ENCODE measurements at regions of chr17 and their contacts with region 1.

Region 1: GRCh38 chr17:75412455-75413317 is 7.2 kb upstream of the GRB2 start:
- DNase-seq: peak; percentile 49 to 88 (median 73)
- ATAC-seq: peak; percentile 90
- H3K4me3 ChIP-seq: peak overlapping the region in 1 of 2 experiments; percentile 22
- H3K4me3 Mint-ChIP-seq: peak overlapping the region; percentile 72
- H3K27ac ChIP-seq: no peak overlapping the region
- H3K27ac Mint-ChIP-seq: peak overlapping the region; percentile 62
- H3K4me1 ChIP-seq: peaks cover 8% of the 10 kb centered on the region
- H3K4me1 Mint-ChIP-seq: peaks cover 16% of the 10 kb centered on the region
- H3K27me3 ChIP-seq: no peaks in the 10 kb centered on the region
- H3K27me3 Mint-ChIP-seq: no peaks in the 10 kb centered on the region
- CTCF ChIP-seq: peak; percentile 70

Region 2: GRCh38 chr17:75182569-75183450 is 229.9 kb before region 1 on chr17 and contains the start of gene SUMO2:
- CTCF ChIA-PET with region 1: no interaction called
- POLR2A ChIA-PET with region 1: no interaction called
- intact Hi-C with region 1: no loop called
- DNase-seq: peak; percentile 89 to 98 (median 95)
- ATAC-seq: peak; percentile 77
- H3K4me3 ChIP-seq: peak within 1 kb of the TSS; percentile 68 to 82
- H3K4me3 Mint-ChIP-seq: peak within 1 kb of the TSS; percentile 92
- H3K27ac ChIP-seq: peak within 1 kb of the TSS; percentile 95
- H3K27ac Mint-ChIP-seq: peak within 1 kb of the TSS; percentile 98
- H3K4me1 ChIP-seq: peaks cover 28% of the 10 kb centered on the region
- H3K4me1 Mint-ChIP-seq: peaks cover 46% of the 10 kb centered on the region
- H3K27me3 ChIP-seq: no peaks in the 10 kb centered on the region
- H3K27me3 Mint-ChIP-seq: no peaks in the 10 kb centered on the region
- CTCF ChIP-seq: no peak
- total RNA-seq, gene SUMO2: 192 to 203 TPM

Region 3: DNA sequence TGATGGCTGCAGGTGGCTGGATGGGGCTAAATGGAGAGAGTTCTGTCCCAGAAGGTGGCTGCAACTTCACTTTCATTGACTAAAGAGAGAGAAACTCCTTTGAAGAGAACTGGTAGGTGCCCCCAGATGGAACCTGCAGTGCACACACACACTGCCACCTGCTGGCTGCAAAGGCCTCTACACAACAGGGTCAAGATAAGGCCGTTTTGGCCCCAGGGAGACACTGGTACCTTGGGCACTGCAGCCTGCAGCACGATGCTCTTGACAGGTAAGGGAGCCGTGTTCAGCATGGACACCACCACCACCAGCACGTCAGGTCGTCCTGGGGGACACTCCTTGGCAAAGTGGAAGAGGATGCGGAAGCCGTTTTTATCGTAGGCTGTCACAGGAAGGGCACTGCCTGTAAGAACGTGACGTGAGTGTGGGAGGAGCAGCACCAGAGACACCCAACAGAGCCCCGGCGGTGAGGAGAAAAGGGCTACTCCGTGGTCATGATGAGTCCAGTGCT is 173.9 kb before region 1 on chr17:
- CTCF ChIA-PET with region 1: interaction called, 10 read pairs
- POLR2A ChIA-PET with region 1: no interaction called
- intact Hi-C with region 1: no loop called
- DNase-seq: peak; percentile 24 to 78 (median 63)
- ATAC-seq: peak; percentile 47
- H3K4me3 ChIP-seq: no peak overlapping the region
- H3K4me3 Mint-ChIP-seq: no peak overlapping the region
- H3K27ac ChIP-seq: no peak overlapping the region
- H3K27ac Mint-ChIP-seq: peak overlapping the region; percentile 58
- H3K4me1 ChIP-seq: peaks cover 6% of the 10 kb centered on the region
- H3K4me1 Mint-ChIP-seq: peaks cover 24% of the 10 kb centered on the region
- H3K27me3 ChIP-seq: no peaks in the 10 kb centered on the region
- H3K27me3 Mint-ChIP-seq: no peaks in the 10 kb centered on the region
- CTCF ChIP-seq: peak; percentile 86

Region 4: GRCh38 chr17:75319904-75320691 is 92.6 kb before region 1 on chr17:
- CTCF ChIA-PET with region 1: interaction called, 208 read pairs
- POLR2A ChIA-PET with region 1: interaction called, 4 read pairs
- intact Hi-C with region 1: loop called (anchors 1 kb)
- DNase-seq: no peak
- ATAC-seq: no peak
- H3K4me3 ChIP-seq: no peak overlapping the region
- H3K4me3 Mint-ChIP-seq: no peak overlapping the region
- H3K27ac ChIP-seq: no peak overlapping the region
- H3K27ac Mint-ChIP-seq: no peak overlapping the region
- H3K4me1 ChIP-seq: peaks cover 5% of the 10 kb centered on the region
- H3K4me1 Mint-ChIP-seq: peaks cover 6% of the 10 kb centered on the region
- H3K27me3 ChIP-seq: no peaks in the 10 kb centered on the region
- H3K27me3 Mint-ChIP-seq: no peaks in the 10 kb centered on the region
- CTCF ChIP-seq: no peak

Region 5: GRCh38 chr17:75345514-75346167 is 67.0 kb before region 1 on chr17:
- CTCF ChIA-PET with region 1: interaction called, 17 read pairs
- POLR2A ChIA-PET with region 1: no interaction called
- intact Hi-C with region 1: no loop called
- DNase-seq: peak in 8 of 9 experiments; percentile 11 to 81 (median 61)
- ATAC-seq: peak; percentile 81
- H3K4me3 ChIP-seq: peak overlapping the region; percentile 10 to 33
- H3K4me3 Mint-ChIP-seq: peak overlapping the region; percentile 72
- H3K27ac ChIP-seq: peak overlapping the region; percentile 8 to 64
- H3K27ac Mint-ChIP-seq: peak overlapping the region; percentile 93
- H3K4me1 ChIP-seq: peaks cover 82% of the 10 kb centered on the region
- H3K4me1 Mint-ChIP-seq: peaks cover 90% of the 10 kb centered on the region
- H3K27me3 ChIP-seq: no peaks in the 10 kb centered on the region
- H3K27me3 Mint-ChIP-seq: no peaks in the 10 kb centered on the region
- CTCF ChIP-seq: no peak

Region 6: GRCh38 chr17:75400326-75400939 is 12.3 kb before region 1 on chr17:
- CTCF ChIA-PET with region 1: interaction called, 17 read pairs
- POLR2A ChIA-PET with region 1: interaction called, 5 read pairs
- intact Hi-C with region 1: no loop called
- DNase-seq: no peak
- ATAC-seq: no peak
- H3K4me3 ChIP-seq: no peak overlapping the region
- H3K4me3 Mint-ChIP-seq: no peak overlapping the region
- H3K27ac ChIP-seq: no peak overlapping the region
- H3K27ac Mint-ChIP-seq: no peak overlapping the region
- H3K4me1 ChIP-seq: peaks cover 48% of the 10 kb centered on the region
- H3K4me1 Mint-ChIP-seq: peaks cover 61% of the 10 kb centered on the region
- H3K27me3 ChIP-seq: no peaks in the 10 kb centered on the region
- H3K27me3 Mint-ChIP-seq: no peaks in the 10 kb centered on the region
- CTCF ChIP-seq: no peak

Region 7: DNA sequence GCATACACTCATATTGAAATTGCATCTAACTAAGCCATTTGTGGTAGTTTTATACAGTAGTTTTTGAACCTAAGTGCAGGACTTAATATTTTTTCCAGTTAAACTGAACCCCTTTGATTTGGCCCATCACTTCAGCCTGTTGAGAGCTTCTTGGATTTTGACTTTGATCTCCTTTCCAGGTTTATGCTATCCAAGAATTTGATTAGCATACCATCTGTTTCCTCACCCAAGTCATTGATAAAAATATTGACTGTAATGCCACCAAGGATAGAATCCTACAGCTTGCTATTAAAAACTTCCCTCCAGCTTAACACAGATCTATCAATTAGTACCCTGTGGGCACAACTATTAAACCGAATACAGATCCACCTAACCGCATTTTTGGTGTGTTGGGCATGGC is 50.9 kb after region 1 on chr17:
- CTCF ChIA-PET with region 1: no interaction called
- POLR2A ChIA-PET with region 1: no interaction called
- intact Hi-C with region 1: no loop called
- DNase-seq: no peak
- ATAC-seq: no peak
- H3K4me3 ChIP-seq: no peak overlapping the region
- H3K4me3 Mint-ChIP-seq: no peak overlapping the region
- H3K27ac ChIP-seq: no peak overlapping the region
- H3K27ac Mint-ChIP-seq: no peak overlapping the region
- H3K4me1 ChIP-seq: no peaks in the 10 kb centered on the region
- H3K4me1 Mint-ChIP-seq: peaks cover 30% of the 10 kb centered on the region
- H3K27me3 ChIP-seq: no peaks in the 10 kb centered on the region
- H3K27me3 Mint-ChIP-seq: no peaks in the 10 kb centered on the region
- CTCF ChIP-seq: no peak

Region 8: DNA sequence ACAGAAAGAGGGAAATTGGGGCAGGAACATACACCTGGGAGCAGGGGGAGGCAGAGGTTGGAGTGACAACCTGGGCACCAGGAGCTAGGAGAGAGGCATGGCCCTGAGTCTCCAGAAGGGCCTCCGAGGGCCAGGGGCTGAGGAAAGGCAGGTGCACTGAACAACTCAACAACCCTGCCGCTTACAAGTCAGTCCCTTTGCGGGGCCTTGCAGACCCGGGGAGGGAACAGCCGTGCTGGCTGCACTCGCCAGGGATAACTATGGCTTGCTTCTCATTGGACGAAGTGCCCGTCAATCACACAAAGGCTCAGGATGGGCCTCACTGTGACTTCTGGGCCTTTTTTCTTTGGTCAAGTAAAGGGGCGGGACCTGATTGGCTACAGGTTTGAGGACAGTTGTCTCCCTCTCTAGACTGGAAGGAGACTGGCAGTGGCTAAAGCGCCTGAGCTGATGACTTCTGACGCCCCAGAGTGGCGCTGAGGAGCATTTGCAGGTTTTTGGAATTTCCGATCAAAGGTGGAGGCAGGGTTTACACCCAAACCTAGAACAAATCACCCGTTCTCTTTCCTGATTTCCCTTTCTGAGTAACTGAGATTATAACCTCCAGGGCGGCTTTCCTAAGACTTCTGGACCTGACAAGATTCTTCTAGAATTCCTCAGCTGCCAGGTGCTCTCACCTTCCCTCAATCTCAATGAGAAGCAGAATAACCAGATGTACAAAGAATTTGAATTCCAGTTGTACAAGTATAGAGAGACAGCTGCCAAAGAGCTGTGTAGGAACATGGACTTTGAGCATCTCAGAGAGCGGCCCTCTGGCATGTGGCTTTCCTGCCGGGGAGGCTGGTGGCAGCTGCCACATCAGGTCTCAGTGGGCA is 1200.5 kb after region 1 on chr17:
- CTCF ChIA-PET with region 1: no interaction called
- POLR2A ChIA-PET with region 1: no interaction called
- intact Hi-C with region 1: no loop called
- DNase-seq: no peak
- ATAC-seq: no peak
- H3K4me3 ChIP-seq: no peak overlapping the region
- H3K4me3 Mint-ChIP-seq: no peak overlapping the region
- H3K27ac ChIP-seq: no peak overlapping the region
- H3K27ac Mint-ChIP-seq: no peak overlapping the region
- H3K4me1 ChIP-seq: no peaks in the 10 kb centered on the region
- H3K4me1 Mint-ChIP-seq: peaks cover 7% of the 10 kb centered on the region
- H3K27me3 ChIP-seq: no peaks in the 10 kb centered on the region
- H3K27me3 Mint-ChIP-seq: no peaks in the 10 kb centered on the region
- CTCF ChIP-seq: no peak